Psoas muscle (tissue), 8 donors: ENCODE measurements at regions of chr18 and their contacts with region 1.

Region 1: GRCh38 chr18:10072671-10073175 is 158.9 kb downstream of the VAPA start:
- DNase-seq: no peak
- ATAC-seq: no peak
- H3K4me3 ChIP-seq: no peak overlapping the region
- H3K27ac ChIP-seq: no peak overlapping the region
- H3K4me1 ChIP-seq: no peaks in the 10 kb centered on the region
- H3K27me3 ChIP-seq: no peaks in the 10 kb centered on the region
- CTCF ChIP-seq: no peak

Region 2: DNA sequence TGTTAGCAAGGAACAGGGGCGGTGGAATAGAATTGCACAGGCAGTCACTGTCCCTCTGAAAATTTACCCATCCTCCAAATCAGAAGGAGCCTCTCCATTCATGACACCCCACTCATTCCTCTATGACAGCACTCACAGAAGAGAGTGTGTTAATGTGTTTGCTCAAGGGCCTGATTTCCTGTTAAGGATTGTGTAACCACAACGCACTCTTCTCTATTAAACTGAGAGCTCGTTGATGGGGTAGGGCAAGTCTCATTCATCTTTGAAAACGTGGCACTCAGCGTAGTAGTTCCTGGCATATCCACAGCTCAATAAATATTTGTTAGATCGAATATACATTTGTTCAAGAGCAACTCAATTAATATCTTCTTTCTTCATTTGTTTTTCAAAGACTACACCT is 52.6 kb before region 1 on chr18:
- intact Hi-C with region 1: loop called in 1 of 2 experiments (anchors 10 kb)
- DNase-seq: no peak
- ATAC-seq: no peak
- H3K4me3 ChIP-seq: no peak overlapping the region
- H3K27ac ChIP-seq: no peak overlapping the region
- H3K4me1 ChIP-seq: peaks cover 9% of the 10 kb centered on the region
- H3K27me3 ChIP-seq: no peaks in the 10 kb centered on the region
- CTCF ChIP-seq: no peak

Region 3: GRCh38 chr18:10242936-10243680 is 170.4 kb after region 1 on chr18:
- intact Hi-C with region 1: loop called in 1 of 2 experiments (anchors 10 kb)
- DNase-seq: no peak
- ATAC-seq: no peak
- H3K4me3 ChIP-seq: no peak overlapping the region
- H3K27ac ChIP-seq: no peak overlapping the region
- H3K4me1 ChIP-seq: no peaks in the 10 kb centered on the region
- H3K27me3 ChIP-seq: peaks cover 0 to 6% (median 5%) of the 10 kb centered on the region in 3 donors
- CTCF ChIP-seq: no peak